RWPE1 (cell line): ENCODE measurements at regions of chr7 and their contacts with region 1.

Region 1: DNA sequence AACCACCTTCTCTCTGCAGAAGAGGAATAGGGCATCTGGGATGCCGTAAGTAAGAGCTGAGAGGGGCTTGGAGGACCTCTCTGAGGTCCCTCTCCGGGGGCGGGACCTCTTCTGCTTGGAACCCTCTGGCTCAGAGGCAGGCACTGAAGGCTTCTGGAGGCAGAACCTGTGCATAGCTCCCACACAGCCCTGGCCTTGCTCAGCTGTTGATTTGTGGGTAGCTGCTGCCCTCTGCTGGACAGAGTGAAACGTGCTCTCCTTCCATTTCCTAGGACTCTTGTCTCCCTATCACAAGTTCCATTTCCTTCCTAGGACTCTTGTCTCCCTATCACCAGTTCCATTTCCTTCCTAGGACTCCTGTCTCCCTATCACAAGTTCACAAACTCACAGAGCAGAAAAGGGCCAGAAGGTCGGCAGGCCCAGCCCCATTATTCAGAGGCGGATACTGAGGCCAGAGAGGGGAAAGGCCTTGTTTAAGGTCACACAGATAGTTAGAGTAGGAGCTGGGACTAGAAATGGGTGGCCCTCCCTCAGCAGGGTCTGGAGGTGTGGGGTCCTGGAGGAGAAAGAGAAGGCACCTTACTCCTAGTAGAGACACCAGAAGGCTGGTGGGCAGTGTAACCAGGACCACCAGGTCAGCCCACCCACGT is 30.3 kb upstream of the GARS1 start:
- DNase-seq: peak; percentile 73
- H3K27ac ChIP-seq: 0 out of 2 replicates have a peak overlapping the region, but pooled peaks have one; percentile 37
- CTCF ChIP-seq: peak; percentile 82

Region 2: DNA sequence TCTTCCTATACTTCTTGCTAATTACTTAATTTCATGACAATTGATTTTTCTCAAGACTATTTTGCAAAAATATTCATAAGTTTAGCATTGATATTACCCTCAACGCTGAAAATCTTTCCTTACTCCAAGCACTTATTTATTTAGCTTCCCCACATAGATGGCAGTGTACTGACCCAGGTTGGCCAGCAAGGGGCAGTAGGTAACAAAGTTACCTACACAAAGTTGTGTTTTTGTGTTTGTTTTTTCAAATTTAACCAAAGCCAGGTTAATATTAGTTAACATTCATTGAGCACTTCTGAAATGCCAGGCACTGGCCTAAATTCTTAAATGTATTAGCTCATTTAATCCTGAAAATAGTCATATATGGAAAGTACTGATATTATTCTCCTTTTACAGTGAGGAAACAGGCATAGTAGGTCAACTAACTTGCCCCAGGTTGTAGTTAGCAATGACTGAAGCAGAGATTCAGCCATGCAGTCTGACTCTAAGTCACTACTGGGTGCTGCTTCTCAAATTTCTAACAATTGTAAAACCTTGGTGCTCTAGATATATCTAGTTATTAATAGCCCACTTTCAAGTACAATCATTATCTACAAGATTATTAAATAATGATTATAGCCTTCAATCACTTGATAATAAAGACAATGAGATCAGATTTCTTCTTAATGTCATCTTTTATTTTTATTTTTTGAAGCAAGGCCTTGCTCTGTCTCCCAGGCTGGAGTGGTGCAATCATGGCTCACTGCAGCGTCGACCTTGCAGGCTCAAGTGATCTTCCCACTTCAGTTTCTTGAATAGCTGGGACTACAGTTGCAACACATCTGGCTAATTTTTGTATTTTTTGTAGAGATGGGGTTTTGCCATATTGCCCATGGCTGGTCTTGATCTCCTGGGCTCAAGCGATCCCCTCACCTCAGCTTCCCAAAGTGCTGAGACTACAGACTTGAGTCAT is 54.0 kb before region 1 on chr7:
- CTCF ChIA-PET with region 1: interaction called, 17 read pairs
- POLR2A ChIA-PET with region 1: no interaction called
- DNase-seq: peak; percentile 15
- H3K27ac ChIP-seq: no peak overlapping the region
- CTCF ChIP-seq: peak; percentile 83

Region 3: GRCh38 chr7:30548762-30549344 is 15.5 kb before region 1 on chr7:
- CTCF ChIA-PET with region 1: interaction called, 25 read pairs
- POLR2A ChIA-PET with region 1: no interaction called
- DNase-seq: peak; percentile 76
- H3K27ac ChIP-seq: no peak overlapping the region
- CTCF ChIP-seq: peak; percentile 95

Region 4: DNA sequence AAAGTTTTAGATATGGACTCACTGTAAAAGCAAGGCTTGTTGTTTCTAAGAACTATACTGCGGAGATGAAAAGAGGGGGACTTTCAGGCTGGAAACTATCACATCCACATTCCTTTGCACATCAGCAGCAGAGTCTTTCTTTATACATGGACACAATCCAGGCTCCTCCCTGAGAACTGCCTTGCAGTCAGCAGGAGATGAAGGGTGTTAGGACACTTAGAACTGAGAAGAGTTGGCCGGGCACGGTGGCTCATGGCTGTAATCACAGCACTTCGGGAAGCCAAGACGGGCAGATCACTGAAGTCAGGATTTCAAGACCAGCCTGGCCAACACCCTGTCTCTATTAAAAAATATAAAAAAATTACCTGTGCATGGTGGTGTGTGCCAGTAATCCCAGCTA is 20.6 kb after region 1 on chr7:
- CTCF ChIA-PET with region 1: interaction called, 11 read pairs
- POLR2A ChIA-PET with region 1: no interaction called
- DNase-seq: no peak
- H3K27ac ChIP-seq: no peak overlapping the region
- CTCF ChIP-seq: no peak

Region 5: GRCh38 chr7:30938435-30939316 is 374.3 kb after region 1 on chr7:
- CTCF ChIA-PET with region 1: no interaction called
- POLR2A ChIA-PET with region 1: no interaction called
- DNase-seq: peak; percentile 79
- H3K27ac ChIP-seq: no peak overlapping the region
- CTCF ChIP-seq: peak; percentile 96